Activated CD4-positive, alpha-beta memory T cell treated with anti-CD3 and anti-CD28 coated beads for 36 hours (primary cell): ENCODE measurements at regions of chr5 and their contacts with region 1.

Region 1: GRCh38 chr5:142441616-142442015 is 116.8 kb upstream of the SPRY4 start:
- DNase-seq: peak; percentile 58
- H3K4me3 Mint-ChIP-seq: no peak overlapping the region
- H3K27ac Mint-ChIP-seq: no peak overlapping the region
- H3K4me1 Mint-ChIP-seq: peaks cover 29% of the 10 kb centered on the region
- H3K27me3 Mint-ChIP-seq: no peaks in the 10 kb centered on the region

Region 2: GRCh38 chr5:142151436-142152383 is 289.9 kb before region 1 on chr5:
- CTCF ChIA-PET with region 1: no interaction called
- POLR2A ChIA-PET with region 1: no interaction called
- intact Hi-C with region 1: loop called (anchors 5 kb)
- DNase-seq: peak; percentile 56
- H3K4me3 Mint-ChIP-seq: no peak overlapping the region
- H3K27ac Mint-ChIP-seq: no peak overlapping the region
- H3K4me1 Mint-ChIP-seq: peaks cover 7% of the 10 kb centered on the region
- H3K27me3 Mint-ChIP-seq: no peaks in the 10 kb centered on the region

Region 3: GRCh38 chr5:142860270-142860669 is 418.7 kb after region 1 on chr5:
- CTCF ChIA-PET with region 1: no interaction called
- POLR2A ChIA-PET with region 1: no interaction called
- intact Hi-C with region 1: no loop called
- DNase-seq: no peak
- H3K4me3 Mint-ChIP-seq: no peak overlapping the region
- H3K27ac Mint-ChIP-seq: no peak overlapping the region
- H3K4me1 Mint-ChIP-seq: peaks cover 19% of the 10 kb centered on the region
- H3K27me3 Mint-ChIP-seq: no peaks in the 10 kb centered on the region

Region 4: DNA sequence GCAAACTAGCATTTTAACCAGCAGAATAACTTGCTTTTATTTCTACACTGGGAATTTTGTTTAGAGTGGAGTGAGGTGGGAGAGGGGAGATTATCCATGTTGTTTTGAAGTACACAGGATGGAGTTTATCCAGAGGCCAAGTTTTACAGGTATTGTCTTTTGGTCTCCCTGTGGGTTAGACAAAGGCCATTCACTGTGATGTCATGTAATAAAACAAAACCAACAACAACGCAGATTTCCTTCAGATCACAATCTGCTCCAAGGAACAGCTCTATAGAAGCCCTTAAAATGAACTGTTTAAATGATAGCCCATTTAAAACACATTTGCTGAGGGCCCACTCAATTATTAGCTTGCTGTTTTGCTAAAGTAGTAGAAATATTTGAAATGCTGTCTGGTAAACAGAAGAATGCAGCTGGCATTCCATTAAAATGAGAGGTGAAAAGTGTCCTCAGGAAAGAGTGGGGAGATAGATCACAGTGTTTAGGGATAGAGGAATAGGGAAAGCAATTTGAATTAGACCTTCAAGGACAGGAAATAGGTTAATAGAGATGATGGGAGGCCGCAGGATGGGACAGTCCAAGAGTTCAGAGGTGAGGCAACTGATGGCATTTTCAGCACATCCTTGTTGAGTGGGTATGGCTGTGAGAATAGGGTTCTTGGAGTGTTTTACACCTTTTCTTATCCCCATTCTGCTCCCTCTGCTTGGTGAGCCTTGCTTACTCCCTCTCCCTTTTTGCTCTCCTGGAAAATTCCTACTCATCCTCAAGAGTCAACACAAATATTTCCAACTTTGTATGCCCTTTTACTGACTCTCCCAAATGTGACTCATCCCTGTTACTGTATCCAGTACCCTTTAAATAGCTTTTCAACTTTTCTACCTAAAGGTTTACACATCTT is 1102.0 kb after region 1 on chr5:
- CTCF ChIA-PET with region 1: no interaction called
- POLR2A ChIA-PET with region 1: no interaction called
- intact Hi-C with region 1: no loop called
- DNase-seq: no peak
- H3K4me3 Mint-ChIP-seq: no peak overlapping the region
- H3K27ac Mint-ChIP-seq: no peak overlapping the region
- H3K4me1 Mint-ChIP-seq: no peaks in the 10 kb centered on the region
- H3K27me3 Mint-ChIP-seq: peaks cover 1% of the 10 kb centered on the region